ENCODE measurements at regions of chr4 and their contacts with region 1.

Region 1: DNA sequence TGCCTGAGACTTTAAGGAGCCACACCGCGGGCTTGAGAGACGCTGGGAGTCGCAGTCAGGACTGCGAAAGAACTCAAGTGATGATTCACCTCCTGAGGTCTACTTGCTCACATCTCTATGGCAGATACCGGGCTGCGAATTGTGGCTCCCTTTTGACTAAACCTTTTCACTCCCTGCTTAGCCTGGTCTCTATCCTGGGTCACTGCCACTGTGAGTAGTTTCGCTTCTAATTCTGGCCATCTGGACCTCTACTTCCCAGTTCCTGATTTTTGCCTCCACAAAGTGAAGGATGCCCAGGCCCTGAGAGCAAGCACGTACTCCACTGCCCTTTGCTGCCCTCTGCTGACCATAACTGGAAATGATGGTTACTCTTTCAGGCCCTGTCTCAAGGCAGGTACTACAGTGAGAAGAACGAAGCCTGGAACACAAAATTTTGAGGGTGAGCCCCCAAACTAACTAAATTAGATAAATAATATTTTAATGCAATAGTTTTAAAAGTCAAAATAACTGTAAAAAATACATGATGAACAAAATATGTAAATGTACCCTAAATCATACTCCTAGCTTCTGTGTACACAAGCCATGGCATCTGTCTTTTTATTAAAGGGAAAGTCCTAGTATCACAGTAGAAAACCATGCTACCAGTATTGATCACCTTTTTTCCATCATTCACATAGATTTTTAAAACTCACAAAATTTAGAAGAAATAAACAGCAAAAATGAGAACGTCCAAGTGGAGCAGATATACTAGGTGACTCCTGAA is 16.7 kb downstream of the MAD2L1 start:
- DNase-seq: no peak
- H3K4me3 ChIP-seq: peak overlapping the region; percentile 52
- CTCF ChIP-seq: peak; percentile 86

Region 2: GRCh38 chr4:119314356-119314755 is 735.6 kb before region 1 on chr4:
- CTCF ChIA-PET with region 1: interaction called, 135 read pairs
- POLR2A ChIA-PET with region 1: no interaction called
- DNase-seq: no peak
- H3K4me3 ChIP-seq: no peak overlapping the region
- CTCF ChIP-seq: peak; percentile 53

Region 3: GRCh38 chr4:119623025-119623424 is 426.9 kb before region 1 on chr4:
- CTCF ChIA-PET with region 1: interaction called, 159 read pairs
- POLR2A ChIA-PET with region 1: no interaction called
- DNase-seq: no peak
- H3K4me3 ChIP-seq: no peak overlapping the region
- CTCF ChIP-seq: no peak

Region 4: DNA sequence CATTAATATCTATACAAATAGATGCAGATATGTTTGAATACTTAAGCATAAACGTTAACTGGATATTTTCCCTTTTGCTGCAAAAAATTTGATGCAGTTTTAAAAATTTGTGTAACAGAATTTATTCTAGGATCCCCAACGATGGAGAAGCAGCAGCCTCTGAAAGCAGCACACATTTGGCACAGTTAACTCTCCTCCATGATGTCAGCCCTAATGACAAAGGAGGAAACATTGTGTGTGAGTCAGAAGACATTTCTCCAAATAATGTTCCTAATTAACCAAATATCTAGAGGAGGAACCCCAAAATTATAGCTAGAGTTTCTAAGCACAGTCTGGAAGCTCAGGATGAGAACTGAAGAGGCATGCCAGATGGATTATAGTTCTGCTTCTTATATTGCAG is 298.6 kb after region 1 on chr4:
- CTCF ChIA-PET with region 1: no interaction called
- POLR2A ChIA-PET with region 1: no interaction called
- DNase-seq: no peak
- H3K4me3 ChIP-seq: no peak overlapping the region
- CTCF ChIP-seq: no peak

Measured in AG04449 (cell line).